Activated CD4-positive, alpha-beta memory T cell treated with anti-CD3 and anti-CD28 coated beads for 36 hours (primary cell): ENCODE measurements at regions of chr20 and their contacts with region 1.

Region 1: GRCh38 chr20:21395666-21396598 is 1.4 kb downstream of the NKX2-4 start:
- DNase-seq: peak; percentile 64
- H3K4me3 Mint-ChIP-seq: peak overlapping the region; percentile 33
- H3K27ac Mint-ChIP-seq: no peak overlapping the region
- H3K4me1 Mint-ChIP-seq: peaks cover 19% of the 10 kb centered on the region
- H3K27me3 Mint-ChIP-seq: peaks cover 72% of the 10 kb centered on the region

Region 2: GRCh38 chr20:21099751-21100577 is 296.0 kb before region 1 on chr20:
- CTCF ChIA-PET with region 1: no interaction called
- POLR2A ChIA-PET with region 1: no interaction called
- intact Hi-C with region 1: loop called (anchors 2 kb)
- DNase-seq: peak; percentile 68
- H3K4me3 Mint-ChIP-seq: peak overlapping the region; percentile 74
- H3K27ac Mint-ChIP-seq: peak overlapping the region; percentile 63
- H3K4me1 Mint-ChIP-seq: peaks cover 30% of the 10 kb centered on the region
- H3K27me3 Mint-ChIP-seq: peaks cover 68% of the 10 kb centered on the region

Region 3: DNA sequence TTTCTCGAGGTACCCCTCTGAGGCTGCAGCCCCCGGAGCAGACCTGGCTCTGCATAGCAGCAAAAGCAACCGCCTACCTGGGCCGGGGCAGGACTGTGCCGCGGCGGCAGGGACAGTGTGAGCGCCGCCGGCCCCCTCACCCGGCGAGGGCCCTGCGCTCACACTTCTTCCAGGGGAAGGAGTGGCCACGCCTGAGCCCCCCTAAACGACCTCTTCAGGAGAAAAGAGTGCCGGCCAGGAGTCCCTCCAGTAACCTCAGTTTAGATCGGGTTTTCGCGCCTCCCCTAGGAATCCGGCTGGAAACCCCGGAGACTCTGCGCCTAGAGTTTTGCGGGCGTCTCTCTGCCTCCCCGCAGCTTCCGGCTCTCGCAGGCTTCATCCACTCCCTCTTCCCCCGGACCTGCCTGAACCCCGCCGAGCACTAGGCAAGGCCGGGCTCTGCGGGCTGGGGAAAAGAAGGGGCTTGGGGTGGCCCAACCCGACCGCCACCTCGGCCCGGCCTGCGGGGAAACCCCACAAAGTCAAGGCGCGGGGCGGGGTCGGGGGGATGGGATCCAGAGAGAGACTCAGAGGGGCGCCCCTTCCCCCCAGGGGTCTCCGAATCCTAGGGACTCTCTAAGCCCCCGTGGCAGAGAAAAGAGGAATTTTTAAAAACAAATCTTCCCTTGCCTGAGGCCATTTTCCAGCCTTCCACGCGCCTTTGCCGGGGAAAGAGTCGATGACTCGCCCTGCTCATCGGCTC is 290.3 kb before region 1 on chr20:
- CTCF ChIA-PET with region 1: no interaction called
- POLR2A ChIA-PET with region 1: no interaction called
- intact Hi-C with region 1: loop called (anchors 2 kb)
- DNase-seq: peak; percentile 21
- H3K4me3 Mint-ChIP-seq: no peak overlapping the region
- H3K27ac Mint-ChIP-seq: no peak overlapping the region
- H3K4me1 Mint-ChIP-seq: peaks cover 23% of the 10 kb centered on the region
- H3K27me3 Mint-ChIP-seq: peaks cover 52% of the 10 kb centered on the region